Breast epithelium (tissue), 4 donors: ENCODE measurements at regions of chr5 and their contacts with region 1.

Region 1: DNA sequence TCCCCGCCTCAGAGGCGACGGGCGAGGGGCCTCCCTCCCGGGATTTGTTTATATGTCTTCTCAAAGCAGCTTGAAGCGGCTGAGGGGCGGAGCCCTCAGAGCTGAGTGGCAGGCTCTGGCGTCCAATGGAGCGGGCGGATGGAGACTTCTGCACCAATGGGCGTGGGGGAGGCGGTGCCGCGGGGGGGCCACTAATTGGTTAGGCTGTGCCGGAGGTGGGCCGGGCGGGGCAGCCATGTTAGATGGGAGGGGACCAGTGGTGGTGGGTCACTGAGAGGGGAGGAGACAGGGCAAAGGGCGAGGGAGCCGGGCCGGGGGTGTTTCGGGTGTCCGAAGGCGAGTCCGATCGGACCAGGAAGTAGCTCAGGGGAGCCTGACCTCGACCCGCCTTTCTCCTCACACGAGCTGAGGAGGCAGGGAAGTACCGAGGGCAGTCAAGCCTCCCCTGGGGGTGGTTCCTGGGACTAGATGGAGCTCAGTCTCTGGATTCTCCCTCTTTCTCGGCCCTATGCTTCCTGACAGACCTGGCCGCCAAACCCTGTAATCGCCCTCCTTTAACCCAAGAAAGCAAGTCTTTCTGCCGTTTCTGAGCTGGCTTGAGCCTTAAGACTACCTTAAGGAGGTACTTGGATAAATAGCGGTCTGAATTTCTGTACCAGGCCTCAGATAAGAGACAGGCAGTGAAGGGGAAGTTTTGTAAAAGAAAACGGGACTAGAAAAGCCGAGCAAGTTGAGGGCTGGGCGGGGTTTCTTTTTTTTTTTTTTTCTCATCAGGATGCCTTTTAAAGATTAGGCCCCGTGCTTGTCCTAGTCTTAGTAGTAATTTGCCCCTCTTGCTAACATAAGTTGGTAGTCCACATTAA is 1.1 kb downstream of the CREBRF start:
- DNase-seq: peak; percentile 99
- H3K4me3 ChIP-seq: peak overlapping the region; percentile 100
- H3K27ac ChIP-seq: peak overlapping the region; percentile 100
- H3K4me1 ChIP-seq: no peaks in the 10 kb centered on the region
- H3K27me3 ChIP-seq: no peaks in the 10 kb centered on the region
- CTCF ChIP-seq: peak in 2 of 3 donors; percentile 15 to 38
- POLR2A ChIP-seq: peak; percentile 25

Region 2: GRCh38 chr5:172984243-172984953 is 72.9 kb before region 1 on chr5:
- intact Hi-C with region 1: loop called (anchors 10 kb)
- DNase-seq: peak; percentile 67 to 76
- H3K4me3 ChIP-seq: peak overlapping the region; percentile 92 to 97 (median 96)
- H3K27ac ChIP-seq: peak overlapping the region; percentile 98 to 99
- H3K4me1 ChIP-seq: peaks cover 3 to 6% of the 10 kb centered on the region in 2 donors
- H3K27me3 ChIP-seq: no peaks in the 10 kb centered on the region
- CTCF ChIP-seq: peak; percentile 16 to 37 (median 37)
- POLR2A ChIP-seq: no peak

Region 3: GRCh38 chr5:174065528-174066197 is 1008.4 kb after region 1 on chr5:
- intact Hi-C with region 1: no loop called
- DNase-seq: no peak
- H3K4me3 ChIP-seq: no peak overlapping the region
- H3K27ac ChIP-seq: no peak overlapping the region
- H3K4me1 ChIP-seq: no peaks in the 10 kb centered on the region
- H3K27me3 ChIP-seq: peaks cover 0 to 14% of the 10 kb centered on the region in 2 donors
- CTCF ChIP-seq: no peak
- POLR2A ChIP-seq: no peak